ENCODE measurements at regions of chr5 and their contacts with region 1.

Region 1: DNA sequence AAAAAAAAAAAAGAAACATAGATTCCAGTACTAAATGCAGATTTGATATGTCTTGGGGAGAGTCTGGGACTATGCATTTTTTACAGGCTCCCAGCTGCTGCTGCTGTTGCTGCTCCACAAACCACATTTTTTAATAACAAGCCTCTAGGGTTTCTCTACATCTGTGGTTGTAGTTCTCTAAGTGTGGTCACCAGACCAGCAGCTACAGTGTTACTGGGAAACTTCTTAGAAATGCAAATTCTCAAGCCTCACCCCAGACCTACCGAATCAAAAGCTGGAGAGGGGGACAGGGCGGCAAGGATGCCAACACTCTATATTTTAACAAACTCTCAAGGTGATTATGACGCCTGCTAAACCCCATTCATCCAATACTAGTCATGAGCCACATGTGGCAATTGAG is 293.4 kb upstream of the PTGER4 start:
- DNase-seq: peak; percentile 34
- H3K4me3 Mint-ChIP-seq: no peak overlapping the region
- H3K27ac Mint-ChIP-seq: peak overlapping the region; percentile 85
- H3K4me1 Mint-ChIP-seq: peaks cover 81% of the 10 kb centered on the region
- H3K27me3 Mint-ChIP-seq: no peaks in the 10 kb centered on the region

Region 2: DNA sequence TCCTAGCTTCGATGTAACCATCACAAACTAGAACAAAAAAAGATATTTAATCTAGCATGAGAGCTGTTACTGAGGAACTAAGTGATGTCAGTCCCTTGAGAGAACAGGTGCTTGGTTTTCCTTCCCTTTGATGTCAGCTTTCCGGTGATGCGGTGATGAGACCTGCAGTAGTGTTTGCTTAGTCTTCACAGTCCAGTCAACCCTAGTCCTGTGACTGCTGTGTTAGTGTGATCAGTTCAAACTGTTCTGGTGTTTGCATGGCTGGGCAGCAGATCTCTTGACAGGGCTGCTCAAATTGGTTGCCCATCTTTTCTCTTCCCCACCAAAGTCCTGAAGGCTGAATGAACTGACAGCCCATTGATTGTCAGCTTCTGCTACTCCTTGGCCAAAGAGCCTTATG is 352.9 kb before region 1 on chr5:
- CTCF ChIA-PET with region 1: no interaction called
- intact Hi-C with region 1: loop called (anchors 5 kb)
- DNase-seq: peak; percentile 51
- H3K4me3 Mint-ChIP-seq: no peak overlapping the region
- H3K27ac Mint-ChIP-seq: no peak overlapping the region
- H3K4me1 Mint-ChIP-seq: peaks cover 10% of the 10 kb centered on the region
- H3K27me3 Mint-ChIP-seq: no peaks in the 10 kb centered on the region

Region 3: GRCh38 chr5:40150896-40151295 is 235.4 kb before region 1 on chr5:
- CTCF ChIA-PET with region 1: no interaction called
- intact Hi-C with region 1: no loop called
- DNase-seq: no peak
- H3K4me3 Mint-ChIP-seq: no peak overlapping the region
- H3K27ac Mint-ChIP-seq: no peak overlapping the region
- H3K4me1 Mint-ChIP-seq: no peaks in the 10 kb centered on the region
- H3K27me3 Mint-ChIP-seq: peaks cover 3% of the 10 kb centered on the region

Region 4: DNA sequence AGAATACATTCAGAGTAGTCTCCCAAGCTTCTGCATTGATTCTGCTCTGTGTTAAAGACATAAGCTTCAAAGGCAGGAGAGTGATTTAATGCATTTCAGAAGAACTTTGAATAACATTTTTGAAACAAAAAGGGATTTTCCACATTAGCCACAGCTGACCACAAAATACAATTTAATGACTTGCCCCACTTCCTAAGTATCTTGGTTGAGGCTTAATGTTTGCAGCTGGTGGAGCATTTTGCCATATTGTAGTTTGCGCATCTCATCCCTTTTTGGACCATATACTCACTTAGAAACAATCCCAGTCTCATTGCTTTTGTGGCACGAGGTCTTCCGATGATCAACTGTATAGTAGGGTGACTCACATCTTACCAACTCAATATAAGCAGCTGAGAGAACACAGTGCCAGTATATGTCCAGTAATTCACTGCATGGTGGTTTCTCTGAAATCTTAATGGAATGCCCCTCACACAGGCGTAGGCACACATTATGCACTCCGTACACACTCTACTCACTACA is 162.3 kb before region 1 on chr5:
- CTCF ChIA-PET with region 1: no interaction called
- intact Hi-C with region 1: loop called (anchors 1 kb)
- DNase-seq: peak; percentile 66
- H3K4me3 Mint-ChIP-seq: peak overlapping the region; percentile 31
- H3K27ac Mint-ChIP-seq: peak overlapping the region; percentile 92
- H3K4me1 Mint-ChIP-seq: peaks cover 50% of the 10 kb centered on the region
- H3K27me3 Mint-ChIP-seq: no peaks in the 10 kb centered on the region

Region 5: GRCh38 chr5:40288800-40289485 is 97.3 kb before region 1 on chr5:
- CTCF ChIA-PET with region 1: no interaction called
- intact Hi-C with region 1: no loop called
- DNase-seq: no peak
- H3K4me3 Mint-ChIP-seq: no peak overlapping the region
- H3K27ac Mint-ChIP-seq: no peak overlapping the region
- H3K4me1 Mint-ChIP-seq: peaks cover 24% of the 10 kb centered on the region
- H3K27me3 Mint-ChIP-seq: no peaks in the 10 kb centered on the region

Region 6: GRCh38 chr5:40367255-40367654 is 19.0 kb before region 1 on chr5:
- CTCF ChIA-PET with region 1: no interaction called
- intact Hi-C with region 1: no loop called
- DNase-seq: peak; percentile 26
- H3K4me3 Mint-ChIP-seq: no peak overlapping the region
- H3K27ac Mint-ChIP-seq: no peak overlapping the region
- H3K4me1 Mint-ChIP-seq: peaks cover 19% of the 10 kb centered on the region
- H3K27me3 Mint-ChIP-seq: no peaks in the 10 kb centered on the region

Region 7: GRCh38 chr5:40410231-40410861 is 24.1 kb after region 1 on chr5:
- CTCF ChIA-PET with region 1: interaction called, 17 read pairs
- intact Hi-C with region 1: loop called (anchors 1 kb)
- DNase-seq: peak; percentile 88
- H3K4me3 Mint-ChIP-seq: peak overlapping the region; percentile 58
- H3K27ac Mint-ChIP-seq: peak overlapping the region; percentile 98
- H3K4me1 Mint-ChIP-seq: peaks cover 64% of the 10 kb centered on the region
- H3K27me3 Mint-ChIP-seq: no peaks in the 10 kb centered on the region

Region 8: DNA sequence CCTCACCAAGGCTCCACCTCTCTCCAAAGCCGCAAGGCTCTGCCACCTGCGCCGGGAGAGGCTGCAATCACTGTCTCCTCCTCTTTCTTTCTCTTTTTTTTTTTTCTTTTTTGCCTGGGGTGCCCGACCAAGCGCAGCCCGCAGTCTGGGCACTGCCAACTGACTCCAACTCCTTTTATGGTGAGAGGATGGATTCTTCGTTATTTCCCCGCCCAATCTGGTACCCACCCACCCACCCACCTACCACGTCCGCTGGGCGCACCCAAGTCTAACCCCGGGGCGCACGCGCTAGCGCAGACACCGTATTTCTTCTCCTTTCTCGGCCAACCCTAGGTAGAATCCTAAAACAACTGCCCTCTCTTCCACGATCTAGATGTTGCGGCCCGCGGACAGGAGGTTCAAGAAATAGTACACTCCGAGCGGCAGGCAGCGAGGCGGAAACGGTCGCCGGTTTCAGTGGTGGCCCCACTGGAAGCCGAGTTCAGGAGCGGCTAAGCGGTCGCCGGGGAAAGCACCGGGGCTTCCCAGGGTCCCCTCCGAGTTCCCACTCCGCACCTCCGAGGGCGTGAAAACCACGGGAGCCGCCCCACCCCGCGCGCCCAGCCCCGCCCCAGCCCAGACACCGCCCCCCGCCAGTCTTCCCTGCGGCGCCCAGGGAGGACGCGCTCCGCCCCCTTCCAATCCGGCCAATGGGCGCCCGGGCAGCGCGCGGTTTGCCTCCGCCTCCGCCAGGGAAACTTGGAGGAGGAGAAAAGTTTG is 293.0 kb after region 1 on chr5:
- CTCF ChIA-PET with region 1: interaction called, 7 read pairs
- intact Hi-C with region 1: loop called (anchors 1 kb)
- DNase-seq: peak; percentile 95
- H3K4me3 Mint-ChIP-seq: peak overlapping the region; percentile 89
- H3K27ac Mint-ChIP-seq: peak overlapping the region; percentile 99
- H3K4me1 Mint-ChIP-seq: peaks cover 41% of the 10 kb centered on the region
- H3K27me3 Mint-ChIP-seq: no peaks in the 10 kb centered on the region

Region 9: GRCh38 chr5:40834849-40835787 is 448.8 kb after region 1 on chr5 and contains the start of gene RPL37:
- CTCF ChIA-PET with region 1: no interaction called
- intact Hi-C with region 1: loop called (anchors 5 kb)
- DNase-seq: peak; percentile 96
- H3K4me3 Mint-ChIP-seq: peak within 1 kb of the TSS; percentile 100
- H3K27ac Mint-ChIP-seq: peak within 1 kb of the TSS; percentile 100
- H3K4me1 Mint-ChIP-seq: peaks cover 48% of the 10 kb centered on the region
- H3K27me3 Mint-ChIP-seq: no peaks in the 10 kb centered on the region
- total RNA-seq, gene RPL37: 2,148 to 2,239 TPM

Region 10: GRCh38 chr5:40904205-40904993 is 518.1 kb after region 1 on chr5:
- CTCF ChIA-PET with region 1: no interaction called
- intact Hi-C with region 1: no loop called
- DNase-seq: peak; percentile 62
- H3K4me3 Mint-ChIP-seq: no peak overlapping the region
- H3K27ac Mint-ChIP-seq: no peak overlapping the region
- H3K4me1 Mint-ChIP-seq: no peaks in the 10 kb centered on the region
- H3K27me3 Mint-ChIP-seq: no peaks in the 10 kb centered on the region